ENCODE measurements at regions of chr4 and their contacts with region 1.

Region 1: DNA sequence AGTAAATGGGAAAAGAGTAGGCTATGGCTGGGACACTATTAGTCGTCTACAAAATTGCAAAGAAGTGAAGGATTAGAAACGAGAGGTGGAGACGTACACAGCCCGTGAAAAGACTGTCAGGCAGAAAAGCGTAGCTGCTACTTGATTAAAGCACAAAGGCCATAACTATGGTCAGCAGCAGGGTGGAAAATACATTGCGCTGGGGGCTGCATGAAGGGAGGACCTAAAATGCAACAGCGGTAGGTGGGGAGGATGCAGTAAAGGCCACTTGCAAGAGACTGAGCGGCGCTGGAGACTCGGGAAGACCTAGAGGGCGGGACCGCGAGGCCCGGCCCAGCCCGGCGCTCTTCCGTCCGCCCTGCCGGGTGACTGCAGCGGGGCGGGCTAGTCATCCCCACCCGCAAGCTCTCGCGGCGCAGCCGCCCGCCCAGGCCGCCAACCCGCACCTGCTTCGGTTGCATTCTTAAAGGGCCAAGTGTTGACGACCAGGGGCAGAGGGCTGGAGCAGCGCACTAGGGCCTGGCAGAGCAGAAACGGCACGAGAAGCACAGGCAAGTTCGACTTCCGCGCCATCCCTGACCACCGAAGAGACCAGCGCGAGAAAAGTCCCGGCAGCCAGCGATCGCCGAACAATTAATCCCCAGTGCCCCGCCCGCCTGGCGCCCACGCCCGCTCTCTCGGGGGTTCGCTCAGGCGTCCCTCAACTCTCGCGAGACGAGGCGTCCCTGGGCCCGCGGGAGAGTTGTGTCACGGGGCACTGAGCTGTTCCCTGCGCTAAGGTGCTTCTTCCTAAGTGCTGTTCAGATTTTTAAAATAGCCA is at the start of gene AGA:
- DNase-seq: peak; percentile 97 to 98
- ATAC-seq: peak; percentile 98 to 100 (median 99)
- H3K4me3 ChIP-seq: peak within 1 kb of the TSS; percentile 36 to 75 (median 66)
- H3K27ac ChIP-seq: peak within 1 kb of the TSS; percentile 86 to 96 (median 93)
- H3K4me1 ChIP-seq: peaks cover 5 to 15% (median 9%) of the 10 kb centered on the region in 9 donors
- H3K27me3 ChIP-seq: no peaks in the 10 kb centered on the region
- CTCF ChIP-seq: peak in 2 of 9 donors; percentile 9 to 14
- total RNA-seq, gene AGA: 4.1 to 12.7 (median 9.1) TPM

Region 2: GRCh38 chr4:177309522-177310371 is 132.3 kb before region 1 on chr4 and contains the start of gene NEIL3:
- intact Hi-C with region 1: loop called in 1 of 10 experiments (anchors 5 kb)
- DNase-seq: peak; percentile 91 to 94
- ATAC-seq: peak; percentile 97 to 99 (median 98)
- H3K4me3 ChIP-seq: peak within 1 kb of the TSS in 9 of 10 donors; percentile 45 to 79 (median 63)
- H3K27ac ChIP-seq: peak within 1 kb of the TSS in 1 of 10 donors; percentile 64
- H3K4me1 ChIP-seq: peaks cover 0 to 33% (median 9%) of the 10 kb centered on the region in 9 donors
- H3K27me3 ChIP-seq: no peaks in the 10 kb centered on the region
- CTCF ChIP-seq: no peak
- total RNA-seq, gene NEIL3: 0.11 to 0.88 (median 0.38) TPM in 6 of 10 donors, not detected in the others

Region 3: DNA sequence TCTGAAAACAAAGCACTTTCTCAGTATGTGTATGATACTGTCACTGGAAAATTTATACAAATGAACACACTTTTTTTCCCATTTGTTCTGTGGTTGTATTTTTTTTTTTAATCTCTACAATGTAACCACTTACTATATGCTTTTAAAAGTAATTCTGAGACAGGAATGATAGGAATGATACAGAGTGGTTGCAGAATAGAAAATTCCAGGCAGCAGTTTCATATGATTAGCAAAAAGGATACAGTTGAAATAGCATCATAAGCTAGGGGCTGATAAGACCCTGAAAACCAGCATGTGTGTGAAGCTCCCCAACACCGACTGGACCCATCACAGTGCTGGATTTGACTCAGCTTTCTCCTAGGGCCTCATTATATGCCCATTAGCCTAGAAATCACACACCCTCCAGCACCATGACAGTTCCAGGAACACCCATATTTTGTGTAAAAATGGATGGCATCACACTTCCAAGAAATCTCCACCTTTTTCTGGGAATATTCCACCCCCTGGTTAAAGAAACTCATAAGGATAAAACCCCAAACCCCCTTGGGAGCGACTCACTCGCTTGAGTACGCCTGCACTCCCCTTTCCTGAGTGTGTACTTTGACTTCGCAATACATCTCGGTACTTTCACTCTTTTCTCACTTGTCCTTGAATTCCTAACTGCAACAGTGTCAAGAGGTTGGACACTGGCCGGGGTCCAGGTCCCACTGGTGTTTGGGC is 77.6 kb after region 1 on chr4:
- intact Hi-C with region 1: no loop called
- DNase-seq: no peak
- ATAC-seq: no peak
- H3K4me3 ChIP-seq: no peak overlapping the region
- H3K27ac ChIP-seq: no peak overlapping the region
- H3K4me1 ChIP-seq: no peaks in the 10 kb centered on the region
- H3K27me3 ChIP-seq: no peaks in the 10 kb centered on the region
- CTCF ChIP-seq: no peak

Measured in heart right ventricle (tissue), 16 donors.